Colonic mucosa (tissue), 4 donors: ENCODE measurements at regions of chr9 and their contacts with region 1.

Region 1: DNA sequence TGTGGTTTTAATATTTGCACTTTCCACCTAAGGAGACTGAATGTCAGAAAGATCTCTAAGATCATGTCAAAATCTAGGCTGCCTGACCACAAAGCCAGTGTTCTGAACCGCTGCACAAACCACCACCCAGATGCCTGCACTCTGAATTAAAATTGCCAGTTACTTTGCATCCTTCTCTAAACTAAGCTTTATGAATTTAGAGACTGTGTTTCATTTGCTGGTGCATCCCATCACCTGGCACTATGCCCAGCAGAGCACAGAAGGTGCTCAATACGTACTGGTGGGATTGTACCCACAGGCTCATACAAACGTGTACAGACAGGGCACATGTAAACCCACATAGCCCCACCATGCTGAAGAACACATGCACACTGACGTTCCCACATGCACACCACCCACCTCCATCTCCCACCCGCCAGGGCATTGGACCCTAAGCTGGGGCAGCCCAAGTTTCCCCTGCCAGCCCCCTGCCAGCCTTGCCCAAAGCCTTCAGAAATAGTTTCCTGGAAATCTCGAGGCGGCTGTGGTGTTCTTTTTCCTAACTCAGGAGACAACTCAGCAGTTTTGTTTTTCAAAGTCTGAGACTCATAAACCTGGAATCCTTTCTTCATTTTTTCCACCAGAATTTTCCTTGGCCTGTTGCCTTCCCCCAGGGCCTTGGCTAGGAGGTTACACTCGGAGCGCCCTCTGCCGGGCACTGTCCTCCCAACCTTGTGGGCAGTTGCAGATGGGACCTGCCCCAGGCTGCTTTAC is 9.6 kb upstream of the TRAF1 start:
- DNase-seq: peak; percentile 98
- H3K4me3 ChIP-seq: no peak overlapping the region
- H3K27ac ChIP-seq: peak overlapping the region; percentile 40
- H3K4me1 ChIP-seq: peaks cover 5% of the 10 kb centered on the region
- H3K27me3 ChIP-seq: no peaks in the 10 kb centered on the region
- CTCF ChIP-seq: peak; percentile 84

Region 2: DNA sequence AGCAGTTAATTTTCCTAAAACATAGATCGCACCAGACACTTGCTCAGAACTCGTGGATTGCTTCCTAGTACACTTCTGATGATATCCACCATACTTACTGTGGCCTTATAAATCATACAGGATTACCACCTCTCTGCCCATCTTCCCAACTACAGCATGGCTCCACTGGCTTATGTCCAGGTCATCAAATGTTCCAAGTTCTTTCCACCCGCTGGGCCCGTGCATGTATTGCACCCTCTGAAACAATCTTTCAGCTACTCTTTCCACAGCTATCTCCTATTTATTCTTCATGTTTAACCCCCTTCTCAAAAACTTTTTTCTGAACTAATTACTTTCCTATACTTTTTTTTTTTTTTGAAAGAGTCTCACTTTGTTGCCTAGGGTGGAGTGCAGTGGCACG is 161.5 kb before region 1 on chr9:
- intact Hi-C with region 1: loop called (anchors 5 kb)
- DNase-seq: no peak
- H3K4me3 ChIP-seq: no peak overlapping the region
- H3K27ac ChIP-seq: no peak overlapping the region
- H3K4me1 ChIP-seq: no peaks in the 10 kb centered on the region
- H3K27me3 ChIP-seq: no peaks in the 10 kb centered on the region
- CTCF ChIP-seq: no peak

Region 3: DNA sequence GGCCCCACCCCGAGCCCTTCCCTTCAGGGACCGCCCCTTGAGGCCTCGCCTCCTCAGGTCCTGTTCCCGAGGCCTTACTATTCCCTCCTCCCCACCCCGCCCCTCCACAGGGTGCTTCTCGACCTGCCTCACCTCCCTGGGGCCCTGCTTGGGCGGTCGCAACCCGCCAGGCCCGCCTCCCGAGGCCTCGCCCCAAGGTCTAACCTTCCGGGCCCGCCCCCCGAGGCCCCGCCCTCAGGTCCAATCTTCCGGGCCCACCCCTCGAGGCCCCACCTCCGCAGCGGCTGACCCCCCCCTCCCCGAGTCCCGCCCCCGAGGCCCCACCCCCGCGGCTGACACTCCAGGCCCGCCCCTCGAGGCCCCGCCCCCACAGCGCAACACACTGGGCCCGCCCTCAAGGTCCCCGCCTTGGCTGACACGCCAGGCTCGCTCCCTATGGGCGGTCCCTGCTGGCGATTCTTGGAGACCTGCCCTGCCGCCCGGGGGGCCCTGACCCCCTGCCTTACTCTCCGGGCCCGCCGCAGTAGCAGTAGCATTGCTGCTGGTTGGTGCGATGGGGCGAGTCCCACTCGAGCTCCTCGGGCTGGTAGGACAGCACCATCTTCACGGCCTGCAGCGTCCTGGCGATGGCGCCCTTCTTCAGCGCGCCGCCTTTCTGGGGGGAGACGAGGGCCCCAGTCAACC is 67.4 kb before region 1 on chr9:
- intact Hi-C with region 1: loop called (anchors 5 kb)
- DNase-seq: peak; percentile 99
- H3K4me3 ChIP-seq: peak overlapping the region; percentile 42
- H3K27ac ChIP-seq: peak overlapping the region; percentile 67
- H3K4me1 ChIP-seq: peaks cover 9% of the 10 kb centered on the region
- H3K27me3 ChIP-seq: no peaks in the 10 kb centered on the region
- CTCF ChIP-seq: no peak

Region 4: GRCh38 chr9:121059998-121060636 is 123.9 kb after region 1 on chr9:
- intact Hi-C with region 1: no loop called
- DNase-seq: peak; percentile 30
- H3K4me3 ChIP-seq: no peak overlapping the region
- H3K27ac ChIP-seq: no peak overlapping the region
- H3K4me1 ChIP-seq: no peaks in the 10 kb centered on the region
- H3K27me3 ChIP-seq: no peaks in the 10 kb centered on the region
- CTCF ChIP-seq: peak; percentile 65